ENCODE measurements at regions of chr6 and their contacts with region 1.

Region 1: DNA sequence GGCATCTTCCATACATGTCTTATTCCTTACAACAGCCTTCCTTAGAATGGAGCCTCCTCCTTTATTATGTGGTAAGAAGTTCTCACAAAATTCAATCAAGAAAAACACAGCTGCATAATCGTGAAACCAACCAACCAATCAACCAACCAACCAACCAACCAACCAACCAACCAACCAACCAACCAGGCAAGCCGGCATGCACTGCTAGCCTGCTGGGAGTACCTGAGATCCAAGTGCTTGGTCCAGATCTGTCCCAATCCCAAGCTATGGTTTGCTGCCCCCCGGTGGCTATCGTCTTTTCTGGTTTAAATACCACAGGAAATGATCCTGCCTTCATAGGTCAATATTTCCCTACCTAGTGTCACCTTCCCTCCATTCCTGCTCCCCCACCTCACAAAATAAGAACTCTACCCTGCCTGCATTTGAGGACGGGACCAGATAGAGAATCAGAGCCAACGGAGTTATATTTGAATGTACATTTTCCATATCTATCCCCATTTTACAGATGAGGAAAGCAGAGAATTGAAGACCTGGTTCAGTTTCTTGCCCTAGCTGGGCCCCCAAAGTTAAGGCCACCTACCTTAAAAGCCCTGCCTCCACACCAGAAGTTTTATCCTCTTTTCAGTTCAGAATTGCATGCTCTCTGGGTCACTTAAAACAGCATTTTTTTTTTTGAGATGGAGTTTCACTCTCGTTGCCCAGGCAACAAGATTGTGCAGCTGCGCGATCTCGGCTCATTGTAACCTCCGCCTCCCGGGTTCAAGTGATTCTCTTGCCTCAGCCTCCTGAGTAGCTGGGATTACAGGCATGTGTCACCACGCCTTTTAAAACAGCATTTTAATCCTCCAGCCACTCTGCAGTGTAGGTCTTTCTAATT is 27.1 kb downstream of the RAB44 start:
- DNase-seq: peak; percentile 49 to 86
- H3K4me3 ChIP-seq: no peak overlapping the region
- H3K27ac ChIP-seq: no peak overlapping the region
- H3K4me1 ChIP-seq: no peaks in the 10 kb centered on the region; a peak in 1 of 7 replicates
- H3K27me3 ChIP-seq: no peaks in the 10 kb centered on the region
- CTCF ChIP-seq: peak in 2 of 3 experiments; percentile 80; a peak in 3 of 4 replicates
- EP300 ChIP-seq: no peak
- POLR2A ChIP-seq: no peak
- RAD21 ChIP-seq: peak; percentile 83 to 84

Region 2: GRCh38 chr6:36633915-36634314 is 90.8 kb before region 1 on chr6:
- CTCF ChIA-PET with region 1: interaction called, 14 read pairs
- POLR2A ChIA-PET with region 1: no interaction called
- DNase-seq: no peak
- H3K4me3 ChIP-seq: no peak overlapping the region
- H3K27ac ChIP-seq: no peak overlapping the region
- H3K4me1 ChIP-seq: peaks cover 0 to 4% (median 1%) of the 10 kb centered on the region in 4 experiments; a peak in 2 of 7 replicates
- H3K27me3 ChIP-seq: no peaks in the 10 kb centered on the region
- CTCF ChIP-seq: no peak
- EP300 ChIP-seq: no peak
- POLR2A ChIP-seq: no peak
- RAD21 ChIP-seq: no peak

Region 3: GRCh38 chr6:36673882-36674281 is 50.9 kb before region 1 on chr6:
- CTCF ChIA-PET with region 1: no interaction called
- POLR2A ChIA-PET with region 1: no interaction called
- DNase-seq: no peak
- H3K4me3 ChIP-seq: no peak overlapping the region
- H3K27ac ChIP-seq: no peak overlapping the region
- H3K4me1 ChIP-seq: peaks cover 5 to 24% (median 15%) of the 10 kb centered on the region in 4 experiments
- H3K27me3 ChIP-seq: peaks cover 0 to 6% (median 2%) of the 10 kb centered on the region in 4 experiments; a peak in 5 of 7 replicates
- CTCF ChIP-seq: no peak
- EP300 ChIP-seq: no peak
- POLR2A ChIP-seq: no peak
- RAD21 ChIP-seq: no peak

Region 4: GRCh38 chr6:36701401-36701991 is 23.3 kb before region 1 on chr6:
- CTCF ChIA-PET with region 1: interaction called, 10 read pairs
- POLR2A ChIA-PET with region 1: no interaction called
- DNase-seq: no peak
- H3K4me3 ChIP-seq: no peak overlapping the region
- H3K27ac ChIP-seq: no peak overlapping the region
- H3K4me1 ChIP-seq: no peaks in the 10 kb centered on the region
- H3K27me3 ChIP-seq: no peaks in the 10 kb centered on the region
- CTCF ChIP-seq: peak; percentile 74 to 88 (median 85)
- EP300 ChIP-seq: no peak
- POLR2A ChIP-seq: no peak
- RAD21 ChIP-seq: peak; percentile 89 to 92

Region 5: DNA sequence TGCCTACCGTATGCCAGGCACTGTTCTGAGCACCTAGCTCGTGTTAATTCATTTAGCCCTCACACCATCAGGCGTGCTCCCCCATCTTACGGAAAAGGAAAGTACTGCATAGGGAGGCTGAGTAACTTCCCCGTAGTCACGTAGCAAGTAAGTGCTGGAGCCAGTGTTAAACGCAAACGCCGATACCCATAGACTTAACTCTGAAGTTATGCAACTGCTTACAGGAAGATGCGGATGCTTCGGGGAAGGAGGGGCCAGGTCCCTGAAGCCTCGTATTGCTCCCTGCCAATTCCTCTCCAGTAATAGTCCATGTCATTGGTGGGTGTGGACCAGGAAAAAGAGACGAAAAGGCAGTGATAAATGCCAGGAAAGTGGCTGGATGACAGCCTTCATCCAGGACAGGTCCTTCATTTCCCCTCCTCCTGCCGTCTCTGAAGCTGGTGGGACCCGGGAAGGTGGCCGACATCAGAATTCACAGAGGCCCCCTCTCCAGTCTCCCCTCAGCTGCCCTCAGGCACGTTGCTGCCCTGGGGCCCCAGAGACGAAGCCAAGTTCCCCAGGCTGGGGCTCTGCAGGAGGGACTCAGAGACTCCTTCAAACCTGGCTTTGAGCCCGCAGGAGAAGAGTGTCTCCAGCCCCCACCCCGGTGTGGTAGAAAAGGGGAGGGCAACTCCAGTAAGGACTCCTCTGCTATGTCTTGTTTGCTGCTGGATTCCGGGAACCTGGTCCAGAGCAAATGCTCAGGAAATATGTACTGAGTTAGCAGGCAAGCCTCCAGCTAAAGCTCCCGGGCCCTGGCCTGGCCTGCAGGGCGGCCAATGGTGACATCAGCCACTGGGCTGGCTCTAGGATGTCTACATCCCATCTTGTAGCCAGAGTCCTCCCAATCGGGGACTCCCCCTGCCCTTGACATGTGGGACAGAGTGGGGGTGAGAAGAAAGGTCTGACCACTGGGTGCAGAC is 10.6 kb after region 1 on chr6:
- CTCF ChIA-PET with region 1: interaction called, 22 read pairs
- POLR2A ChIA-PET with region 1: interaction called, 4 read pairs
- DNase-seq: no peak
- H3K4me3 ChIP-seq: no peak overlapping the region
- H3K27ac ChIP-seq: no peak overlapping the region
- H3K4me1 ChIP-seq: peaks cover 2 to 11% (median 6%) of the 10 kb centered on the region in 4 experiments; a peak in 5 of 7 replicates
- H3K27me3 ChIP-seq: no peaks in the 10 kb centered on the region; a peak in 1 of 7 replicates
- CTCF ChIP-seq: no peak
- EP300 ChIP-seq: no peak
- POLR2A ChIP-seq: no peak
- RAD21 ChIP-seq: no peak

Measured in H1 (cell line).